PC-9 (cell line): ENCODE measurements at regions of chr18 and their contacts with region 1.

Region 1: GRCh38 chr18:10475654-10476291 is 21.3 kb downstream of the APCDD1 start:
- DNase-seq: no peak
- H3K4me3 ChIP-seq: no peak overlapping the region
- H3K27ac ChIP-seq: no peak overlapping the region
- H3K4me1 ChIP-seq: no peaks in the 10 kb centered on the region
- H3K27me3 ChIP-seq: peaks cover 3% of the 10 kb centered on the region; the same call in 1 of the 2 replicates
- CTCF ChIP-seq: no peak

Region 2: DNA sequence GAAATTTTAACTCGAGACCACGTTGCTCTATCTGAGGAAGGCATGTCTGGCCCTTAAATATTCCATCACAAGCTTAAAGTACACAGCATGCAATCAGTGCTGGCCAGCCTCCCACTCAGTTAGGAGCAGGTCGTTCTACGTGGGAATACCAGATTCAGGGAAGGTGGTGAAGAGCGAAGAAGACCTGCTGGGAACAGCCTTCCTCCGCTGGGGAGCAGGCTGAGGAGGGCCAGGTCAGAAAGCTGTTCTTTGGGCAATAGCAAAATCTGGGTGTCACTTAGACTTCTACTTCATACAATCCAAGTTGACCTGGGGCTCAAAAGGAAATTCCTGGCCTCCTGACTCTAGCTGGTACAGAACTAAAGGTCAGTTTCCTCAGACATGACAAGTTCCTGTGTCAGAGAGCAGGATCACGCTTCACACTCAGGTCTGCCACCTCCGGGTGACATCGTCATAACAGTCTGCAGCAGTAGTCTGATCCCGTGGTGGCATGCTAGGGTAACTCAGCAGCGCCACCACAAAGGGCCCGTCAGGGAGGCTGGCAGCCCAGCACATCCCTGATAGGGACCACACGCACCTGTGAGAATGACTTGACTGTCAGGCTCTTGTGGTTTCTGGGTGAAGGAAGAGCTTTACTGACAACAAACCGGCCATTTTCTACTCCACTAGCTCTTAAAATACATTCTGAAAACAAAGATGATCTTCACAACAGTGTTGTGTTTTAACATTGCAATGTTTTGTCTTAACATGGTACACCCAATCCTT is 14.8 kb after region 1 on chr18:
- CTCF ChIA-PET with region 1: no interaction called
- POLR2A ChIA-PET with region 1: interaction called, 15 read pairs
- intact Hi-C with region 1: no loop called
- DNase-seq: peak in 1 of 2 experiments; percentile 27
- H3K4me3 ChIP-seq: no peak overlapping the region
- H3K27ac ChIP-seq: no peak overlapping the region
- H3K4me1 ChIP-seq: no peaks in the 10 kb centered on the region
- H3K27me3 ChIP-seq: no peaks in the 10 kb centered on the region
- CTCF ChIP-seq: no peak